Activated T-helper 1 cell treated with anti-CD3 and anti-CD28 coated beads, Interleukin-12 subunit alpha, Interleukin-12 subunit beta, Interleukin-2, Interleukin-4 antibody, amounts not matched to agents 30 ng/mL and 10 ng/mL and 1 ng/mL, durations not matched to agents 14 hours and 24 hours and 36 hours (primary cell): ENCODE measurements at regions of chr12 and their contacts with region 1.

Region 1: DNA sequence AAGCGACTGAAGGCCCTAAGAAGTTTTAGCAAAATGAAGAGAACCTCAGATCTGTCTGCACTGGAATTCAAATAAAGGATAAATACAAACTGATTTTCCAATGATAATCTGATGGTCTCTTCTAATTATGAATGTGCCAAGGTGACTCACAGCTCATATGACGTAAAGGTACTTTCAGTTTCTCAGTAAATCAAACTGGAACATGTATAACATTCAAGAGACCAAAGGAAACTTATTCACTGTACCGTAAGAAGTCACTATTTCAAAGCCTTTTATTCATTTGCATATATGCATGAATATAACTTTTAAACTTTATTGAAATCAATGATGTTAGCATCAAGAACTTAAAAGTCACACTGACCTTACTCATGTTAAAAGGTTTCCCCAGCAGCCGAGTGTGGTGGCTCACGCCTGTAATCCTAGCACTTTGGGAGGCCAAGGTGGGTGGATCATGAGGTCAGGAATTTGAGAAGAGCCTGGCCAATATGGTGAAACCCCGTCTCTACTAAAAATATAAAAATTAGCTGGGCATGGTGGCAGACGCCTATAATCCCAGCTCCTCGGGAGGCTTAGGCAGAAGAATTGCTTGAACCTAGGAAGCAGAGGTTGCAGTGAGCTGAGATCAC is 52.2 kb downstream of the ATXN2 start:
- DNase-seq: no peak
- H3K4me3 Mint-ChIP-seq: peak overlapping the region; percentile 11
- H3K27ac Mint-ChIP-seq: peak overlapping the region; percentile 95
- H3K4me1 Mint-ChIP-seq: peaks cover 29% of the 10 kb centered on the region
- H3K27me3 Mint-ChIP-seq: no peaks in the 10 kb centered on the region

Region 2: DNA sequence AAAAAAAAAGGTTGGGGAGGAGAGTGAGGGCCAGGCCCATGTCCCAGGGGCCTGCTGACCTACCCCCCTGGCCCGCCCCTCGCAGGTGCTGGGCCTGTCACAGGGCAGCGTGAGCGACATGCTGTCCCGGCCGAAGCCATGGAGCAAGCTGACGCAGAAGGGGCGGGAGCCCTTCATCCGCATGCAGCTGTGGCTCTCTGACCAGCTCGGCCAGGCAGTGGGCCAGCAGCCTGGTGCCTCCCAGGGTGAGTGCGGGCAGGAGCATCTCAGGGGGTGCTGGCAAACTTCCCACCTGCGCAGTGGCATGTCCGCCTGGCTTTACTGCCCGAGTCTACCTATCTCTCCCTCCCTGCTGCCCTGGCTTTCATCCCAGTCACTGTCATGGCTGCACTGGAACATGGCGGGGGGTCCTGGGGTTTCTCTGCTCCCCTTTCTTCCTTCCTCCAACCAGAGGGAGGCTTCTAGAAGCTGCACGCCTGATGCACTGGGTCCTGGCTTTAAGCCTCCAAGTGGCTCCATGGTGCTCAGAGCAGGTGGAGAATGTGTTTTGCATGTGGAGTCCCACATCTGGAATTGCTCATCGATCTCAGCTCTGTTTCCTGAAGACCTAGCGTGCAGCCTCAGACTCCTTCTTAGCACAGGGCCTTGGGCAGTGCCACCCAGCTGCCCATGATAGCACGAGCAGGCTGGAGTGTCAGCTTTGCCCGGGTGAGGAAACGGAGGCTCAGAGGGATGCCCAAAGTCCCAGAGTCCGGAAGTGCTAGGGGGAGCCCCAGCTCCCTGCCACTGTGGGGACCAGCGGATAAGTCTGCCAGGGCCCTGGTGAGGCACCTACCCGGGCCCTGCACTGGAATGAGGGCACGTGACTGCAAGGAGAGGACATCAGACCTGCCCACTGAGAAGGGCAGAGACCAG is 224.3 kb before region 1 on chr12:
- intact Hi-C with region 1: no loop called
- DNase-seq: no peak
- H3K4me3 Mint-ChIP-seq: no peak overlapping the region
- H3K27ac Mint-ChIP-seq: no peak overlapping the region
- H3K4me1 Mint-ChIP-seq: no peaks in the 10 kb centered on the region
- H3K27me3 Mint-ChIP-seq: no peaks in the 10 kb centered on the region

Region 3: GRCh38 chr12:111434680-111435338 is 112.1 kb before region 1 on chr12:
- intact Hi-C with region 1: loop called (anchors 1 kb)
- DNase-seq: peak; percentile 83
- H3K4me3 Mint-ChIP-seq: peak overlapping the region; percentile 68
- H3K27ac Mint-ChIP-seq: peak overlapping the region; percentile 97
- H3K4me1 Mint-ChIP-seq: peaks cover 88% of the 10 kb centered on the region
- H3K27me3 Mint-ChIP-seq: no peaks in the 10 kb centered on the region

Region 4: DNA sequence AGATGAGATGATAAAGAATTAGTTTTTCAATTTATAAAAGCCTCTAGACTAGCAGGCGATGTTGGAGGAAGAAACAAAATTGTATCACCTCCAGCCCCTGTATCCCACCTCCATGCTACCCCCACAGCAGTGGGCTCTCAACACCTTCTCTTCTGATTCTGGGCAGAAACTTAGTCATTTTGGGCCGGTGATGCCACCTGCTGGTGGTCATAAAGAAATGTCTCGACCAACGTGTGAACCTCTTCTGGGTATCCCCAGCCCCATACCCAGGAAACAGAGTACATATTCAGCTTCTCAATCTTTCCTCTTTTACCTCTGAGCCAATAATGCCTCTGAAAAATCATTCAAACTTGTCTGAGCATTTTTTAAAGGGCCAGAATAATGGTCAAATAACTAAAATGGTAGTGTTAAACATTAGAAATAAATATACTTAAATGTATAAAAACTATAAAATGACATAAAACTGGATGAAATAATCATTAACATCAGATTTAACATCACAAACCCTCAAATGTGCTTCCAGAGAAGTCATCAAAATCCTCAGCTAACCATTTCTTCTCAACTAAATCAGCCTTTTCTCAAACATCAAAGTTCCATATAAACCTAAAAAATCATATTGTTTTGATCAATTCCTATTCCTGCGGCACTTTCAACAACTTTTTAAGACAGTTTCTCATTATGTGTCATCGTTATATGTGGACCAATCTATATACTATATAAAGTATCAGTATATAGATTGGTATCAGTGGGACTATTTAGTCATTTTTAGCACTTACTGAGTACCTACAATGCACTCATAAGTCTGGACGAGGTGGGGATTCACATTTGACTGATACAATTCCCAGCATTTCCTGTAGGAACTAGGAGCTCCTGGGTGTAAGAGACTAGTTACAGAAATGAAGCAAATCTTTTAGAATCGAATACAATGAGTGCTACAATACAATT is 17.2 kb before region 1 on chr12:
- intact Hi-C with region 1: loop called (anchors 1 kb)
- DNase-seq: peak; percentile 47
- H3K4me3 Mint-ChIP-seq: no peak overlapping the region
- H3K27ac Mint-ChIP-seq: peak overlapping the region; percentile 44
- H3K4me1 Mint-ChIP-seq: peaks cover 14% of the 10 kb centered on the region
- H3K27me3 Mint-ChIP-seq: no peaks in the 10 kb centered on the region

Region 5: GRCh38 chr12:112108201-112109079 is 561.6 kb after region 1 on chr12 and contains the start of gene NAA25:
- intact Hi-C with region 1: no loop called
- DNase-seq: peak; percentile 84
- H3K4me3 Mint-ChIP-seq: peak within 1 kb of the TSS; percentile 99
- H3K27ac Mint-ChIP-seq: peak within 1 kb of the TSS; percentile 98
- H3K4me1 Mint-ChIP-seq: peaks cover 42% of the 10 kb centered on the region
- H3K27me3 Mint-ChIP-seq: no peaks in the 10 kb centered on the region
- total RNA-seq, gene NAA25: 52.2 and 58.1 TPM in 2 replicates